ENCODE measurements at regions of chr7 and their contacts with region 1.

Region 1: DNA sequence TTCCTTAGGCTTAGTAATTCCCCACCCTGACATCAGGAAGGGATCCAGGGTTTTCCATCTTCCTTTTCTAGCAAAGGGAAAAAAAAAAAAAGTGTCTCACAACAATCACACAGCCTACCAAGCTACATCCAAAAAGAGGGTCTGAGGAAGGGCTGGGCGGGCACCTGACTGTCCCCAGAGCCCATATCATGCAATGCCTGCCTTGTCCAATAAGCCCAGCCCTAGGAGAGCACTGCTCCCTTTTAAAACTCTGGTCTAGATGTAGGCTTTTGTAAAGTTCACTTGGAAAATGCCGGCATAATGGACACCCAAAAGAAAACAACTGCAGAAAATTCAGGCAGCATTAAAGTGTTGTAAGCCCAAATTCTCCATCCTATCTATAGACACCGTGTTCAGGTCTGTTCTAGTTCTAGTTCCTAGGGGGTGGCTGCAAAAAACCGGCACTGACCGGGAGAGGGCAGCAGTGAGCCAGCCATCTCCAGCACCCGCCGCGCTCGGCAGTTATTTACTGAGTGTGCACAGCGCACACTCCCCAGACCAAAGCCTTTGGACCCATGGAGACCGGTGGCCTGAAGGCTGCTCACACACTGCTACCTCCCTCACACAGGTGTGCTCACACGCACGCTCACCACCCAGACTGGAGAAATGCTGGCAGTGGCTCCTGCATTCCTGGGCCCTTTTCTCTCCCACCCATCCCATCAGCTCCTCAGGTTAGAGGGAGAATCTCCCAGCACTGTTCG is 48.7 kb downstream of the PODXL start:
- DNase-seq: peak; percentile 88
- ATAC-seq: peak; percentile 91
- H3K4me3 Mint-ChIP-seq: no peak overlapping the region
- H3K27ac Mint-ChIP-seq: peak overlapping the region; percentile 22
- H3K4me1 Mint-ChIP-seq: peaks cover 29% of the 10 kb centered on the region
- H3K27me3 Mint-ChIP-seq: peaks cover 7% of the 10 kb centered on the region

Region 2: GRCh38 chr7:131336956-131337355 is 170.8 kb before region 1 on chr7:
- CTCF ChIA-PET with region 1: no interaction called
- DNase-seq: no peak
- ATAC-seq: no peak
- H3K4me3 Mint-ChIP-seq: no peak overlapping the region
- H3K27ac Mint-ChIP-seq: no peak overlapping the region
- H3K4me1 Mint-ChIP-seq: peaks cover 4% of the 10 kb centered on the region
- H3K27me3 Mint-ChIP-seq: no peaks in the 10 kb centered on the region

Region 3: DNA sequence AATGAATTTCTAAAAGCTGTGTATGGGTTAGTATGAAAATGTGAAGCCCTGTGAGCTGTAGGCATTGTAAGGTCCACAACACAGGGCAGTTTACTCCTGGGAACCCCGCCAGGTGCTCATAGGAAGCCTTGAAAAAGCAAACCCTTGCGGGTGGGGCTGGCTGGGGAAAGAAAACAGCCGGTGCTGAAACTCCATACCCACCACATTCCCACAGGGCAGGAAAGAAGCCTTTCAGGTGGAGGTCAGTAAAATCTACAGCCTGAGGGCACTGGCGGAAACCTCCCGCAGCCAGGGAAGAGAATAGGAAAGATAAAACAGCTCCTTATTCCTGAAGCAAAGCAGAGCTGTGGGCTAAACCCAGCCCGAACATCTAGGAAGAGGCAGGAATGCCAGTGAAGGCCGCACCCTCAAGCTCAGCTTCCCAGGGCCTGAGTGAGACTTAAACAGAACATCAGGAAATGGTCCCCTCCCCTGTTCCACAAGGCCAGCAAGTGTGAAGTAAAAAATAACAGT is 13.9 kb after region 1 on chr7:
- CTCF ChIA-PET with region 1: interaction called, 27 read pairs
- DNase-seq: no peak
- ATAC-seq: no peak
- H3K4me3 Mint-ChIP-seq: peak overlapping the region; percentile 17
- H3K27ac Mint-ChIP-seq: peak overlapping the region; percentile 92
- H3K4me1 Mint-ChIP-seq: peaks cover 17% of the 10 kb centered on the region
- H3K27me3 Mint-ChIP-seq: peaks cover 3% of the 10 kb centered on the region

Region 4: DNA sequence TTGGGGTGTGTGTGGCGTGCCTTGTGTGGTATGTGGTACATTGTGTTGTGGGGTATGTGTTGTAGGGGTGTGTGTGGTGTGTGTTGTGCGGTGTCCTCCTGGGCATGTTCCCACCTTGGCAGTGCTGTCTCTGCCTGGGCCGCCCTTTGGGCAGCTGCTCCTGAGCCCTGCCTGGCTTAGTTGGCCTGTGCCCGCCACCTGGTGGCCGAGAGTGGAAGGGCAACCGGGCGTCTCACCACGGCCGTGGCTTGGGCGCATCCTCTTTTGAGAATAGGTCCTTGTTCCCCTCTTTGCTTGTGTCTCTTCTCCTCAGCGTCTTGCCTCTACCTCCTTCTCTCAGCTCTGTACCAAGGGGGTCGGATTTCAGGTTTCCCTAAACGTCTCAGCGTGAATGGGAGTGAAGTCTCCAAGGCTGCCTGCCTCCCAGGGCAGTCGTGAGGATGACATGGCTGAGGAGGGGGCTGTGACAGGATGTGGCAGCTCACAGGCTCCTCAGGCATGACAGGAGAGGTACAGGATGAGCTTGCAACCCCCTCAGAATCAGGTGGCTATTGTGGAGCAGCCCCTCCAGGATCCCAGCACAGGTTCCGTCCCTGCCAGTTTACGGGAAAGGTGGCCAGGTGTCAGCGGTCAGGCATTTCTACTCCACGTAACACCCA is 147.0 kb after region 1 on chr7:
- CTCF ChIA-PET with region 1: interaction called, 39 read pairs
- DNase-seq: peak; percentile 89
- ATAC-seq: peak; percentile 96
- H3K4me3 Mint-ChIP-seq: no peak overlapping the region
- H3K27ac Mint-ChIP-seq: no peak overlapping the region
- H3K4me1 Mint-ChIP-seq: no peaks in the 10 kb centered on the region
- H3K27me3 Mint-ChIP-seq: peaks cover 6% of the 10 kb centered on the region

Measured in activated CD8-positive, alpha-beta memory T cell treated with anti-CD3 and anti-CD28 coated beads, Interleukin-2, amount 10 ng/mL, durations not matched to agents 7 days and 5 days (primary cell).